Stomach (tissue), 19 donors: ENCODE measurements at regions of chr10 and their contacts with region 1.

Region 1: GRCh38 chr10:132142411-132143161 is 44.2 kb upstream of the DPYSL4 start:
- DNase-seq: peak; percentile 47 to 60
- H3K4me3 ChIP-seq: no peak overlapping the region
- H3K27ac ChIP-seq: no peak overlapping the region
- H3K4me1 ChIP-seq: peaks cover 0 to 7% (median 0%) of the 10 kb centered on the region in 4 donors
- H3K27me3 ChIP-seq: peaks cover 0 to 36% (median 18%) of the 10 kb centered on the region in 3 donors
- CTCF ChIP-seq: peak in 5 of 7 experiments; percentile 49 to 87 (median 80)
- EP300 ChIP-seq: no peak
- POLR2A ChIP-seq: no peak

Region 2: DNA sequence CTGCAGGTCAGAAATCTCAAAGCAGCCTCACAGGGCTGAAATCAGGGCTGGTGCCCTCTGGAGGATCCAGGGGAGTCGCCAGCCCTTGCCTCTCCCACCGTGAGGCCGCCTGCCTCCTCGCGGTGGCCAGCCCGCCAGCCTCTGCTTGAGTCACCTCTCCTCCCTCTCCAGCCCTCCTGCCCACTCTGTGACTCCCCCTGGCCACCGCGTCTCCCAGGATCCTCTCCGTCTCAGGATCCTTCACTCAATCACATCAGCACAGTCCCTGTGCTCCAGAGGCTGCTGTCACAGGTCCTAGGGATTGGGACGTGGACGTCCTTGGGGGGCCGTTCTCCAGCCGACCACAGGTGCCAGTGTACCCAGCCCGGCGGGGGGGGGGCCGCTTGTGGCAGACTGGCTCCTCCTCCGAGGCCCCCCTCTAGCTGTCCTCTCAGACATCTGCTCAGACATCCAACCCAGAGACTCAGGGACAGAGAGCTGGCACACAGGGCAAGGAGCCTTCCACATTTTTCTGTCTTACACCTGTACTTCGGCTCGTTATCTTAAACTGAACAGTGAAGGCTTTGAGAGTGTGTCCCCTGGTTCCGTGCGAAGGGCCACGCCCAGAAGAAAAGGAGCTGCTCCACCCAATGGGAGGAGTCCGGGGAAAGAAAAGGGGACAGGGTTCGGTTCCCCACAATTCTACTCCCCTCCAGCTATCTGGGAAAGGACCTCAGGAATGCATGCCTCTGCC is 251.2 kb before region 1 on chr10:
- intact Hi-C with region 1: loop called (anchors 5 kb)
- DNase-seq: peak in 1 of 2 donors; percentile 46
- H3K4me3 ChIP-seq: no peak overlapping the region
- H3K27ac ChIP-seq: no peak overlapping the region
- H3K4me1 ChIP-seq: peaks cover 0 to 7% (median 2%) of the 10 kb centered on the region in 4 donors
- H3K27me3 ChIP-seq: peaks cover 0 to 52% (median 21%) of the 10 kb centered on the region in 3 donors
- CTCF ChIP-seq: no peak
- EP300 ChIP-seq: no peak
- POLR2A ChIP-seq: no peak

Region 3: DNA sequence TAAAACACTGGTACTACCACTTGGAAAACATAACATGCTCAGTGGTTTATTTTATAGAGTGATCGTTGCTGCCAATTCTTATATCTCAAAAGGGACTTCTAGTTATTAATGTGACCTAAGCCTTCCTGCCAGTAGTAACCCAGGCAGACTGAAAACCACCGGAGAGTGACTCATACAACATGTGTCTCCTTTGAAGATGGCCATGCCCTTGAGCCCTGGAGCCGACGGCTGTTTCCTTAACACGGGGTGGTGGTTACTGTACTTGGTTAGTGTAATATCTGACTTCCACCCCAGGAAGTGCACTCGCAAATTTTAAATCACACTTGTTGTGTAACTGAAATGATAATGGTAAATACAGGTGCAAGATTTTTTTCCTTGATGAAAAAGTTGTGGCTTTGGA is 46.4 kb before region 1 on chr10:
- intact Hi-C with region 1: no loop called
- DNase-seq: peak; percentile 2 to 28
- H3K4me3 ChIP-seq: no peak overlapping the region
- H3K27ac ChIP-seq: no peak overlapping the region
- H3K4me1 ChIP-seq: no peaks in the 10 kb centered on the region
- H3K27me3 ChIP-seq: peaks cover 0 to 23% (median 0%) of the 10 kb centered on the region in 3 donors
- CTCF ChIP-seq: no peak
- EP300 ChIP-seq: no peak
- POLR2A ChIP-seq: no peak